Heart right ventricle (tissue), 16 donors: ENCODE measurements at regions of chr10 and their contacts with region 1.

Region 1: GRCh38 chr10:110007701-110008517 is at the start of gene ADD3:
- DNase-seq: peak; percentile 96 to 98
- ATAC-seq: peak; percentile 91 to 97 (median 93)
- H3K4me3 ChIP-seq: peak within 1 kb of the TSS; percentile 87 to 99 (median 96)
- H3K27ac ChIP-seq: peak within 1 kb of the TSS; percentile 89 to 99 (median 96)
- H3K4me1 ChIP-seq: peaks cover 0 to 78% (median 63%) of the 10 kb centered on the region in 9 donors
- H3K27me3 ChIP-seq: no peaks in the 10 kb centered on the region
- CTCF ChIP-seq: no peak
- total RNA-seq, gene ADD3: 62.5 to 106 (median 89.5) TPM

Region 2: DNA sequence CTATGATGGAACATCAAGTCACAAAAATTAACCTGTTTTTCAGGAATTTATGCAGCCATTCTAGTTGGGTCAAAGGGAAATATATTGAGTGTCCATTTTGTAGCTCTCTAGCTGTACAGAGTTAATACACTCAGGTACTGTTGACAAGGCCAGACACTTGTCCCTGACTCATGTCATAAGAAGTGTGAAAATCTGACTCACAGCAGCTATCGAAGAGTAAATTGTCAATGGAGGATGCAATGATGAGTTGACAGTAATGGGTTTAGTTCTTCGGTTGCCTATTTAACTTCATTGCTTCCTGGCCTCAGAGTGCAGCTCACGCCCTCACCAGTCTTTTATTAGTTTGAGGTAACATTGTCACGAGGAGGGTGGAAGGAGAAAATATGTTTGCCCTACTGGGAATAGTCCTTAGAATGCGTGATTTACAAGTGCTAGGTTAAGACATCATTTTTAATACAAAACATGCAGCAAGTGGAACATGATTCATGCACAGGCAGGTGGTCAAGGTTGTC is 339.7 kb before region 1 on chr10:
- intact Hi-C with region 1: no loop called
- DNase-seq: no peak
- ATAC-seq: no peak
- H3K4me3 ChIP-seq: no peak overlapping the region
- H3K27ac ChIP-seq: no peak overlapping the region
- H3K4me1 ChIP-seq: no peaks in the 10 kb centered on the region
- H3K27me3 ChIP-seq: peaks cover 0 to 6% (median 0%) of the 10 kb centered on the region in 7 donors
- CTCF ChIP-seq: no peak

Region 3: DNA sequence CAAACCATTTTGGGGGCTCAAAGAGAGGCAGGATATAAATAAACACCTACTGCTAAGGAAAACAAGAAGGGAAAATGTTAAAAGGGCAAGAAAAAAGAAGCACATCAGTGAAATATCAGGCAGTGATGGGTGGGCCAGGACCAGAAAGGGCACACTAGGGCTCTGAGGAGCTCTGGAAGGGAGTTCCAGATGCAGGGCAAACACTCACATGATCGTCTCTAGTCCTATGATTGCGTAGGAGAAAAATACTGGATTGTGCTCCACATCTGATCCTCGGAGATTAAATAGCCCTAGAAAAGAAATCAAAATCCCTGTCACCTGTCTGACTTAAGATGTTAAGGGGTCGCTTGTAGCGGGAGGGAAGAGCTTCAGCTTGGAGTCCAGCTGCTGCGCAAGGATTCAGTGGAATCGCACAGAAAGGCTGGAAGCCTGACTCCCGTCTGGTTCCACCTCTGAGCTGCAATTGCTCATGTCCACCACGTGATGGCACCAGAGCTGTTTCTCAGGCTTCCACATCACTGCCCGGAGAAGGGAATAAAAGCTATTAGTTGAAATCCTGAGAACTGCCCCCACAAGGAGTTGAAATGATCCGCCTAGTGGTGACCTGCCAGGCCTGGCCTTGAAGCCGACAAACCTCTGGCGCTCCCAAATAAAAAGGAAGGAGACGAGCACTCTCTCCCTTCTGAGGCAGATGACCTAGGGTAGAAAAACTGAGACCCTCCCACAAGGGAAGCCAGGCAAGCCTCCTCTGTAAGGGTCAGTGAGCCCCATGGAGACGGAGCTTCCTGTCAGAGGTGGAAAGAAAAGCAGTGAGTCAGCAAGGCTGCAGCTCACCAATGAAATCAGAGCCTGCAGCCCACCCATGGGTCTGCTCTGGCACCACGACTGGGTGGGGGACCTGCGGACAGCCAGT is 123.8 kb before region 1 on chr10:
- intact Hi-C with region 1: loop called in 5 of 10 experiments (anchors 5 to 10 kb)
- DNase-seq: peak; percentile 48 to 75
- ATAC-seq: peak; percentile 79 to 93 (median 87)
- H3K4me3 ChIP-seq: peak overlapping the region in 6 of 10 donors; percentile 3 to 30 (median 24)
- H3K27ac ChIP-seq: peak overlapping the region; percentile 12 to 78 (median 68)
- H3K4me1 ChIP-seq: peaks cover 3 to 49% (median 23%) of the 10 kb centered on the region in 9 donors
- H3K27me3 ChIP-seq: no peaks in the 10 kb centered on the region
- CTCF ChIP-seq: peak; percentile 92 to 98 (median 96)

Region 4: GRCh38 chr10:109929501-109930219 is 78.2 kb before region 1 on chr10:
- intact Hi-C with region 1: loop called in 5 of 10 experiments (anchors 2 to 10 kb)
- DNase-seq: no peak
- ATAC-seq: no peak
- H3K4me3 ChIP-seq: no peak overlapping the region
- H3K27ac ChIP-seq: no peak overlapping the region
- H3K4me1 ChIP-seq: peaks cover 5 to 23% (median 11%) of the 10 kb centered on the region in 9 donors
- H3K27me3 ChIP-seq: no peaks in the 10 kb centered on the region
- CTCF ChIP-seq: no peak

Region 5: DNA sequence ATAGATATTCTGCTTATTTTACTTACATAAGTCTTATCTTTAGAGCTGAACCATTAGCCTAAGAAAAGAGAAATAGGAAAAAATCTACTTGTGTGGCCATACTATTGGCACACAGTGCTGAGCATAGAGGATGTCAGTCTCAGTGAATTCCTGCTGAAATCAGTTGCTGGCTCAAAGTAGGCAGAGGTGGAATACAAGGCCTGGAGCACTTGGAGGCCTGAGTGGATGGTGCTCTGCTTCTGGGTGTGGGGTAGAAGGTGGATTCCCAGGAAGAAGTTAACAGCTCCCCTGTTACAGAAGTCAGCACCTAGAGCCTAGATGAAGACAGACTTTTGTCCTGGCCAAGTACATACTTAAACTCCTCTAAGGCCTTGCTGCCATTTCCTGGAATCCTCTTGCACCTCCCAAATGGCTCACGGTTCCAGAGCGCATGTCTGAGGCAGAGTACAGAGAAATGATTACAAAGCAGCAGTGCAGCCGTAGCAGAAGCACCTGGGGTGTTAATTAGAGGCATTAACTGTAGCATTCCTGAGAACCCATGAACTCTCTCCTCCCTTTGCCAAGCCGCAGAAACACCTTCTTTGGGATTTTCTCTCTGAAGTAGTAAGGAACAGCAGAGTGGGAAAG is 66.6 kb before region 1 on chr10:
- intact Hi-C with region 1: no loop called
- DNase-seq: no peak
- ATAC-seq: no peak
- H3K4me3 ChIP-seq: no peak overlapping the region
- H3K27ac ChIP-seq: no peak overlapping the region
- H3K4me1 ChIP-seq: no peaks in the 10 kb centered on the region
- H3K27me3 ChIP-seq: no peaks in the 10 kb centered on the region
- CTCF ChIP-seq: no peak

Region 6: DNA sequence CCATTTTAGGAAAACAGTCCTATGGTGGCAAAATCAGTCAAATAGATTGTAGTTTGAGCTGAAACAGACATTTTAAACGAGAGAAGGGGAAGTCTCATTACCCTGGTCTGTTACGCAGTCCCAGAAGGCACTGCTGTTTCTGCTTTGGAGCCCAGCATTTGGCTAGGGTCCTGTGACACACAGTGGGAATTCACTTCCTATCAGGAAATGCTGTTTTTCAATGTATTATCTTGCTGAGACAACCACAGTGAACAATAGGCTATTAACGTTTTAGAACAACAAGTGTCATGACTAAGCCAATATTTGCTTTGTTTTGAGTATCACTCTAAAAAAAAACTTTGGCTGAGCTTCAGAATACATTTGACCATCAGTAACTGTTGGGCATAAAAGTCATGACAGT is 74.0 kb after region 1 on chr10:
- intact Hi-C with region 1: loop called in 5 of 10 experiments (anchors 2 to 10 kb)
- DNase-seq: peak; percentile 19 to 35
- ATAC-seq: peak; percentile 67 to 86 (median 74)
- H3K4me3 ChIP-seq: no peak overlapping the region
- H3K27ac ChIP-seq: peak overlapping the region in 8 of 10 donors; percentile 47 to 84 (median 57)
- H3K4me1 ChIP-seq: peaks cover 2 to 81% (median 64%) of the 10 kb centered on the region in 9 donors
- H3K27me3 ChIP-seq: no peaks in the 10 kb centered on the region
- CTCF ChIP-seq: no peak

Region 7: GRCh38 chr10:110118891-110119621 is 111.1 kb after region 1 on chr10:
- intact Hi-C with region 1: loop called in 5 of 10 experiments (anchors 5 to 10 kb)
- DNase-seq: peak in 1 of 2 donors; percentile 28
- ATAC-seq: peak; percentile 82 to 95 (median 90)
- H3K4me3 ChIP-seq: no peak overlapping the region
- H3K27ac ChIP-seq: peak overlapping the region in 9 of 10 donors; percentile 1 to 88 (median 78)
- H3K4me1 ChIP-seq: peaks cover 0 to 19% (median 15%) of the 10 kb centered on the region in 9 donors
- H3K27me3 ChIP-seq: no peaks in the 10 kb centered on the region
- CTCF ChIP-seq: no peak

Region 8: DNA sequence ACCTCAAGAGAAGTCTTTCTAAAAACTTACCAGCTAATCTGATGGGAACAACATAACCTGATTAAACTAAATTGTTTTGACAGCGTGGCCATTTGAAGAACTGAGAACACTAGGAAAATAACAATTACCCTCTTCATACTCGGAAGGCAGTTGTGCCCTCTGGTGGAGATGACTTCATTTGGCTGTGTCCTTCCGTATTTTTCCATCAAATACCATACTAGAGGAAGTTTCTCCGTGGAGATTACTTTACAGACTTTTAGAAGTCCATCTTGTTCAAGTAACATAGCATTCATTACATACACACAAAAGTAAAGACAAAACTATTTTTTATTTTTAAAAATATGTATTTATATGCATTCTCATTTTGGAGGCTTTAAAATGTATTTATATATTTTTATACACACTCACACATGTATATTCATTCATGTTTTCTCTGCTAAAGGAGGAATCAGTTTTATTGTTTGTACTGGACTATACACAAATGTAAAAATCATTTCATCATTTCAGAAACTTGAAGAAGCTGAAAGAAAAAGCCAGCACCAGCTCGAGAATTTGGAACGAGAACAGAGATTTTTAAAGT is 271.6 kb after region 1 on chr10:
- intact Hi-C with region 1: loop called in 2 of 10 experiments (anchors 5 to 10 kb)
- DNase-seq: peak in 1 of 2 donors; percentile 71
- ATAC-seq: peak; percentile 46 to 84 (median 76)
- H3K4me3 ChIP-seq: peak overlapping the region in 1 of 10 donors; percentile 26
- H3K27ac ChIP-seq: peak overlapping the region in 6 of 10 donors; percentile 5 to 57 (median 41)
- H3K4me1 ChIP-seq: peaks cover 2 to 55% (median 30%) of the 10 kb centered on the region in 9 donors
- H3K27me3 ChIP-seq: no peaks in the 10 kb centered on the region
- CTCF ChIP-seq: peak; percentile 69 to 89 (median 78)